ENCODE measurements at regions of chr19 and their contacts with region 1.

Region 1: GRCh38 chr19:44903602-44904425 is 1.8 kb upstream of the APOE start:
- DNase-seq: peak; percentile 80
- H3K4me3 Mint-ChIP-seq: no peak overlapping the region
- H3K27ac Mint-ChIP-seq: no peak overlapping the region
- H3K4me1 Mint-ChIP-seq: peaks cover 15% of the 10 kb centered on the region
- H3K27me3 Mint-ChIP-seq: peaks cover 22% of the 10 kb centered on the region

Region 2: DNA sequence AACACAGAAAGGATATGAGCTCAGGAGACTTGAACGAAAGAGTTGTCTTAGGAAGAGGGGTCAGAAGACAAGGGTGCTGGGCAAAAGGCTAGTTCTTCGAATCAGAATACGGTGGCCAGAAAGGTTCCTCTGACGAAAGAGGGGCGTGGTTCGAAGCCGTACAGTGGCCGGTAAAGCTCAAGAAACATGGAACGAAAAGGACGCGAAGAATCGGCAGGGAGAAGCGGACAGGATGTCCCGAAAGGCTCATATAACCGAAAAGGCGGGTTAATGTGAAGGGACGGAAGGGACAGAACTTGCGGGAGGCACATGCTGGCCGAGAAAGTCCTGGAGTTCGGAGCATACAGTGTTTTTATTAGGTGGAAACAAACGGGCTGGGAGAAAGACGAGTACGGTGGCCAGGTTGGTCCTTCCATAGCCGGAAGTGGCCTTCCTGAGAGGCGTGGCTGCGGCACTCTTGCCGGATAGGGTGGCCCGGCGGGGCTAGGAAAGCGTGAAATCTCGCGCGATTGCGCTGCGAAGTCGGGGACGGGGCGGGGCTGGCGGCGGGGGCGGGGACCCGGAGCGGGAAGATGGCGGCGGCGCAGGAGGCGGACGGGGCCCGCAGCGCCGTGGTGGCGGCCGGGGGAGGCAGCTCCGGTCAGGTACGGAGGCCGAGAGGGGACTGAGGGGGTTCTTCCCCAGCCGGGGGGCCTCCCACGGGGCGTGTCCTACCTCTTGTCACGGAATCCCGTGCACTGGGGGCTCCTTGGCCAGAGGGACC is 51.2 kb after region 1 on chr19 and contains the start of gene CLPTM1:
- CTCF ChIA-PET with region 1: interaction called, 18 read pairs
- intact Hi-C with region 1: loop called (anchors 1 kb)
- DNase-seq: peak; percentile 98
- H3K4me3 Mint-ChIP-seq: peak within 1 kb of the TSS; percentile 98
- H3K27ac Mint-ChIP-seq: peak within 1 kb of the TSS; percentile 98
- H3K4me1 Mint-ChIP-seq: peaks cover 48% of the 10 kb centered on the region
- H3K27me3 Mint-ChIP-seq: no peaks in the 10 kb centered on the region
- total RNA-seq, gene CLPTM1: 32.4 to 34.6 TPM

Region 3: GRCh38 chr19:45059278-45059965 is 155.6 kb after region 1 on chr19:
- CTCF ChIA-PET with region 1: no interaction called
- intact Hi-C with region 1: loop called (anchors 2 kb)
- DNase-seq: peak; percentile 90
- H3K4me3 Mint-ChIP-seq: no peak overlapping the region
- H3K27ac Mint-ChIP-seq: peak overlapping the region; percentile 32
- H3K4me1 Mint-ChIP-seq: no peaks in the 10 kb centered on the region
- H3K27me3 Mint-ChIP-seq: no peaks in the 10 kb centered on the region

Region 4: GRCh38 chr19:45331423-45331822 is 427.6 kb after region 1 on chr19:
- CTCF ChIA-PET with region 1: no interaction called
- intact Hi-C with region 1: loop called (anchors 10 kb)
- DNase-seq: no peak
- H3K4me3 Mint-ChIP-seq: no peak overlapping the region
- H3K27ac Mint-ChIP-seq: no peak overlapping the region
- H3K4me1 Mint-ChIP-seq: no peaks in the 10 kb centered on the region
- H3K27me3 Mint-ChIP-seq: peaks cover under 1% of the 10 kb centered on the region

Measured in activated naive CD4-positive, alpha-beta T cell treated with anti-CD3 and anti-CD28 coated beads for 36 hours (primary cell).